HEK293 (cell line): ENCODE measurements at regions of chr19 and their contacts with region 1.

Region 1: DNA sequence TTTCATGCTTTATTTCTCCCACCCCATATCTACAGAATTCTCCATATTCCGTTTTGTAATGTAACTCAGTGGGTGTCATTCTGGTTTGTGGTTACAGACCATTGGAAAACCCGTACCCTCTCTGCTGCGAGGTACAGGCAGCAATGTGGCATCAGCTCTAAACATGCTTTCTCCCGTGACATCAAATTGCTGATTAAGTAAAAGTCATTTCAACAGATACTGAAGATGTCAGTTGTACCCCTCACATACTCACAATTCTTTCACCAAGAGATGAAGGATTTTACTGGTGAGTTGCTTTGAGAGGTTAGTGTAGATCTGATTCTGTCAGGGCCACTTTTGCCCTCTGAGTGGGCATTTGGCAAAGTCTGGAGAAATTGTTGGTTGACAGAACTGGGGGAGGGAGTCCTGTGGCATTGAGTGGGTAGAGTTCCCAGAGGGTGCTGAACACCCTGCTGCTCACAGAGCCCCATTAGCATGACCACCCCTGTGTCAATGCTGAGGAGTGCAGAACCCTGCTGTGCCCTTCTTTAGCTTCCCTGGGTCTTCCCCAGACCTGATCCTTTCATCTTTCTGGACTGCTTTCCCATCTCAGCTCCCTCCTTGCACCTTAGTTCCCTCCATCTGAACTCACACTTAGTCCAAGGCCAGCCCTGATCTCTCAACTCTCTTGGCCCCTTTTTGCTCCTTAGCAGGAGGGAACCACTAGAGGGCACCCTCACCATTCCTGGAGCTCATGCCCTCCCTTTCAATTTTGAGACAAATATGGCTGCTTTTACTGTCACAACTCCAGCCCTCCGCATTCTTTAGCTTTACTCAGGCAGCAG is 39.9 kb upstream of the CEACAM8 start:
- H3K4me3 ChIP-seq: no peak overlapping the region
- H3K27ac ChIP-seq: no peak overlapping the region
- H3K4me1 ChIP-seq: no peaks in the 10 kb centered on the region
- CTCF ChIP-seq: peak; percentile 86

Region 2: GRCh38 chr19:42465827-42466280 is 168.8 kb before region 1 on chr19:
- CTCF ChIA-PET with region 1: no interaction called
- POLR2A ChIA-PET with region 1: no interaction called
- H3K4me3 ChIP-seq: no peak overlapping the region
- H3K27ac ChIP-seq: no peak overlapping the region
- H3K4me1 ChIP-seq: peaks cover 22% of the 10 kb centered on the region
- CTCF ChIP-seq: 0 out of 2 replicates have a peak, but pooled peaks have one; percentile 28

Region 3: DNA sequence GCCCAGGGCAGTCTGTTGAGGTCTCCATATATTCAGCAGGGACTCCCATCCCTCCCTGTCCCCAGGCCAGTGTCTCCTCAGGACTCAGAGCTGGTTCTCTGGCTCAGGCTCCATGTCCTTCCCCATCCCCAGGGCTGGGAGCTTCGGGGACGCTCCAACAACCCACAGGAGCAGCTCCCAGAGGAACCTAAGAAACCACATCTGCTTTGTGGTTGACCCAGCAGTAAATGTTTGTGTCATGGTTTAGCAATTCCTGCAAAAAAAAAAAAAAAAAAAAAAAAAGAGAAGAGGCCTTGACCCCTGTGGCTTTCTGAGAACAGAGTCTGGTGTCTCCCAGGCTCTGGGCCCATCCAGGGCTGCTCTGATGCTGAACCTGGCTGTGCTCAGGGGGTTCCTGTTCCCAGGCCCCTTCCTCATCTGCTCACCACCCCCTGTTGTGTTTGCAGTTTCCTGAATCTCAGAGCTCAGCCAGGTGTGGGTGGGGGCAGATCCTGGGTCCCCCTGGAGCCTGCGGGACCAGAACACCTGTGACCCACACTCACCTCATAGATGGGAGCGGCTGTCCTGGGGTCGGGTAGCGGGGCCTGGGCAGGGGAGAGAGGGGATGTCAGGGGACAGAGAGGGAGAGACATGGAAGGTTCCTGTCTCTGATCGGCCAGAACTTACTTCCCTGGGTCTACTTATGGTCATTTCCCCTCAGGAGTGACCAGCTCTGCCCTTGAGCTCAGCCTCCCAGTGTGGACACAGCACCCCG is 81.2 kb before region 1 on chr19:
- CTCF ChIA-PET with region 1: no interaction called
- POLR2A ChIA-PET with region 1: no interaction called
- H3K4me3 ChIP-seq: no peak overlapping the region
- H3K27ac ChIP-seq: no peak overlapping the region
- H3K4me1 ChIP-seq: no peaks in the 10 kb centered on the region
- CTCF ChIP-seq: no peak

Region 4: GRCh38 chr19:42606660-42607351 is 27.8 kb before region 1 on chr19:
- CTCF ChIA-PET with region 1: interaction called, 15 read pairs
- POLR2A ChIA-PET with region 1: no interaction called
- H3K4me3 ChIP-seq: no peak overlapping the region
- H3K27ac ChIP-seq: no peak overlapping the region
- H3K4me1 ChIP-seq: no peaks in the 10 kb centered on the region
- CTCF ChIP-seq: peak; percentile 91

Region 5: DNA sequence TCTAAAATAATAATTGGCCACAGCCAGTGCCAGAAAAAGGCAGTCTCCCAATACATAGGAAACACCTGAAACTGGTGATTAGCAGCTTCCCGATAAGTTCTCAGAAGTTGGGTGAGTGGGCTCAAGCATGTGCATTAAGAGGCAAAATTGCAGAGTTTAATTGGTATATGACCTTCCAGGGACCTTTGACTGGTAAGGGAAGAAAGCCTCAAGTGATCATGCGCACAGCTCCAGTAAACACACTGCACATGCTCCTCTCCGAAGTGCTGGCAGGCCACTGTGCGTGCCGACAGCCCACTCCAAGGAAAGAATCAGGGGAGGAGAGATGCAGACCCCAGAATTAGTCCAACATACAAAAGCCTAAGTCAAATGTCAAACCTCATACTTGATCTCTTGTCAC is 21.0 kb before region 1 on chr19:
- CTCF ChIA-PET with region 1: interaction called, 17 read pairs
- POLR2A ChIA-PET with region 1: interaction called, 3 read pairs
- H3K4me3 ChIP-seq: no peak overlapping the region
- H3K27ac ChIP-seq: no peak overlapping the region
- H3K4me1 ChIP-seq: no peaks in the 10 kb centered on the region
- CTCF ChIP-seq: no peak

Region 6: GRCh38 chr19:42683917-42684513 is 49.4 kb after region 1 on chr19:
- CTCF ChIA-PET with region 1: interaction called, 13 read pairs
- POLR2A ChIA-PET with region 1: no interaction called
- H3K4me3 ChIP-seq: no peak overlapping the region
- H3K27ac ChIP-seq: no peak overlapping the region
- H3K4me1 ChIP-seq: no peaks in the 10 kb centered on the region
- CTCF ChIP-seq: peak; percentile 13; the same call in 1 of the 2 replicates

Region 7: DNA sequence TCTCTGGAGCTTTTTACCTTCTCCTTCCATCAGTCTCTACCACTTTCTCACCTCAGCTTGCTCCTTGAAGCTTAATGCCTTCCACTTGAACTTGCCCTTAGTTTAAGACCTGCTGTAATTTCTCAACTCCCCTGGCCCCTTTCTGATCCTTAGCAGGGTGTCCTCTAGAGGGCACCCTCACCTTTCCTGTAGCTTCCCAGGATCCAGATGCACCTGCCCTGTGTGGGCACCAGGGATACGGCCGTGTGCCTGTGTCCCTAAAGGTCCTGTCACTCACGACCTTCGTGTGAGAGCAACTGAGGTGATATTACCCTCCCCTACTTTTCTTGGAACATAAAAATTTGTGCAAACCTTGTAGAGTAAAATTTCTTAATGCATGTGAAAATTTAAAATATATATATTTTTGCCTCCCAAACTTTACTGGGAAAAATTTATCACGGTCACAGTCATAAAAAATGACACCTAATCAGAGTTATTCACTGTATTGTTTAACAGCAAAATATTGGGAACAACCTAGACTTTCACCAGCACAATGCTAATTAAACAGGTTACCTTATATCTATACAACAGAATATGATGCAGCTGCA is 59.2 kb after region 1 on chr19:
- CTCF ChIA-PET with region 1: interaction called, 16 read pairs
- POLR2A ChIA-PET with region 1: no interaction called
- H3K4me3 ChIP-seq: no peak overlapping the region
- H3K27ac ChIP-seq: no peak overlapping the region
- H3K4me1 ChIP-seq: peaks cover 9% of the 10 kb centered on the region; the same call in 1 of the 2 replicates
- CTCF ChIP-seq: peak; percentile 70

Region 8: GRCh38 chr19:42794765-42795164 is 160.1 kb after region 1 on chr19:
- CTCF ChIA-PET with region 1: interaction called, 11 read pairs
- POLR2A ChIA-PET with region 1: no interaction called
- H3K4me3 ChIP-seq: no peak overlapping the region
- H3K27ac ChIP-seq: no peak overlapping the region
- H3K4me1 ChIP-seq: no peaks in the 10 kb centered on the region
- CTCF ChIP-seq: no peak